ENCODE measurements at regions of chr1 and their contacts with region 1.

Region 1: GRCh38 chr1:243255791-243256512 is at the start of gene SDCCAG8:
- DNase-seq: peak; percentile 93 to 97 (median 94)
- H3K4me3 ChIP-seq: peak within 1 kb of the TSS; percentile 85 to 92
- H3K4me3 Mint-ChIP-seq: peak within 1 kb of the TSS; percentile 96 to 100 (median 100)
- H3K27ac ChIP-seq: peak within 1 kb of the TSS; percentile 87
- H3K27ac Mint-ChIP-seq: peak within 1 kb of the TSS; percentile 99 to 100 (median 100)
- H3K4me1 ChIP-seq: peaks cover 25% of the 10 kb centered on the region
- H3K4me1 Mint-ChIP-seq: peaks cover 27 to 51% (median 37%) of the 10 kb centered on the region in 4 donors
- H3K27me3 ChIP-seq: no peaks in the 10 kb centered on the region
- H3K27me3 Mint-ChIP-seq: peaks cover 0 to 2% of the 10 kb centered on the region in 2 donors
- total RNA-seq, gene SDCCAG8: 32.8 to 35.7 TPM

Region 2: DNA sequence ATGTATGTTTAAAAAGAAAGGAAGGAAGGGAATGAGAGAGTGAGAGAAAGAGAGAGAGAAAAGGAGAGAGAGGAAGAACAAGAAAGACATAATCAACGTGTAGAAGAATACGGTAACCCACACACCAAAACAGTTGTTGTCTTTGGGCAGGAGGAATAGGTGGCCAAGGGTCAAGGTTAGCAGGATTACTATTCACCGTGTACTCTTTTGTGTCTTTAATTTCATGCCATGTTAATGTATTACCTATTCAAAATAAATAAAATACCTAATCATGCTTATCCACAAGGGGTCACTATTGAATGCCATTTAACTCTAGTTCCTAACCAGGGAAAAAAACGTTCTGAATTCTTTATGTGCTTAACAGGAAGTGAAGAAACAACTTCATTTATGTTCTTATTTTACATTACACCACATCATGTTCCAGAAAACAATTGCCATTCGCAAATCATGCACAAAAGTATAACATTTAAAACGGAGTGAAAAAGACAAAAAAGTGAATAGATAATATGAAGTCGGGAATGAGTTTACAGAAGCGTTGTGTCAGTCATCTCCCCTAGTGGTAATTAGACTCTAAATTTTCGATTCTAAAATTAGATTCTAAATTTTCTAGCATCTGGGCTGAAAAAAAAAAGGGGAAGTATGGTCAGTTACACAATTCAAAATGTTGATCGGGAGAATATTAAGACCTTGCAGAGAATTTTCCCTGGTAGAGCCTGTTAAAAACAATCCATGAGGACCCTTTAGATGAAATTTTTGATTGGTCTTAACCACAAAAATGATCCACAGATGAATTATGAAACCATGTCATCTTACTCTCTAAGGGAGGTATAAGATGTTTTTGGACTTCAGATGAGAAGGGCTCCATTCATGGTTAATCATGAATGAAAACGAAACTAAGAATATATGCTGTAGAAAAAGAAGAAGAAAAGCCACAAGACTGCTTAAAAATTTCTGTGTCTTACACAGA is 1724.5 kb before region 1 on chr1:
- CTCF ChIA-PET with region 1: no interaction called
- POLR2A ChIA-PET with region 1: no interaction called
- intact Hi-C with region 1: loop called (anchors 5 kb)
- DNase-seq: peak in 4 of 5 donors; percentile 65 to 70 (median 68)
- H3K4me3 ChIP-seq: peak overlapping the region; percentile 45 to 52
- H3K4me3 Mint-ChIP-seq: peak overlapping the region; percentile 91 to 99 (median 98)
- H3K27ac ChIP-seq: peak overlapping the region; percentile 10
- H3K27ac Mint-ChIP-seq: peak overlapping the region in 6 of 7 donors; percentile 1 to 94 (median 90)
- H3K4me1 ChIP-seq: peaks cover 5% of the 10 kb centered on the region
- H3K4me1 Mint-ChIP-seq: peaks cover 5 to 11% (median 9%) of the 10 kb centered on the region in 4 donors
- H3K27me3 ChIP-seq: no peaks in the 10 kb centered on the region
- H3K27me3 Mint-ChIP-seq: peaks cover 0 to 1% of the 10 kb centered on the region in 2 donors

Region 3: GRCh38 chr1:241847796-241848685 is 1407.9 kb before region 1 on chr1 and contains the start of gene EXO1:
- CTCF ChIA-PET with region 1: no interaction called
- POLR2A ChIA-PET with region 1: interaction called, 4 read pairs
- intact Hi-C with region 1: loop called (anchors 5 kb)
- DNase-seq: peak; percentile 90 to 93 (median 92)
- H3K4me3 ChIP-seq: peak within 1 kb of the TSS; percentile 80 to 98
- H3K4me3 Mint-ChIP-seq: peak within 1 kb of the TSS; percentile 95 to 99 (median 98)
- H3K27ac ChIP-seq: peak within 1 kb of the TSS; percentile 85
- H3K27ac Mint-ChIP-seq: peak within 1 kb of the TSS; percentile 98 to 100 (median 99)
- H3K4me1 ChIP-seq: peaks cover 14% of the 10 kb centered on the region
- H3K4me1 Mint-ChIP-seq: peaks cover 13 to 20% (median 15%) of the 10 kb centered on the region in 4 donors
- H3K27me3 ChIP-seq: no peaks in the 10 kb centered on the region
- H3K27me3 Mint-ChIP-seq: no peaks in the 10 kb centered on the region
- total RNA-seq, gene EXO1: 0.41 to 0.44 TPM

Region 4: DNA sequence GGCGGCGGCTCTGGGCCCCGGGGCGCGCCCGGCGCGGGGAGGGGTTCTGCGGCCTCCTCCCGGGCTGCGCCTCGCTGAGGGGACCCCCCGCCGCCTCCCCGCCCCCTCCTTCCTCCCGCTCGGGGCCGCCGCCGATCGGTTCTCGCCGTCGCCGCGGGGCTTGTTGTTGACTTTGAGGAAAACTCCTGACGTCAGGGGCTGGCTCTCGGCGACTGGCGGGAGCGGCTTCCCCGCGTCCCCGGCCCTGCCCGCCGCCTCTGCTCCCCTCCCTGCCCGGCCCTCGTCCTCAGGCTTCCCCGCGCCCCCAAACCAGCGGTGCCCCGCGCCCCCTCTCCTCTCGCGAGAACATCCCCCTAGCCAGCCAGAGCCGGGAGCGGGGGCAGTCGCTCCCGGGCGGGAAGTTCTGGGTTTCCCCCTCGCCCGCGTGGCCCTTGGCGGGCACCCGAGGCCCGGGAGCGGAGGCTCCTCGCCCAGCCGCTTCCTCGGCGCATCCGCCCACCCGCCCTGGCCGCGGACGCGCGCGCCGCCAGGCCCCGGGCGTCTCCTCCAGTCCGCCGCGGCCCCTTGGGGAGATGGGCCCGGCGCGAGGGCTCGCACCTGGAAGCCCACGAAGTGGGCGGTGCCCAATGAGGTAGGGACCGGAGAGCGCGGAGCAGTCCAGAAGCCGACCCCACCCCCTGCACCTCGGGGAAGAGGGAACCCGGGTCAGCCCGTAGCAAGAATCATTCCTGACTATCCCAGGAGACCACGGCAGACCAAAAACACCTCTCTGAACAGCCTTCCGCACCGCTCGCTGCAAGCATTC is 594.7 kb after region 1 on chr1:
- CTCF ChIA-PET with region 1: no interaction called
- POLR2A ChIA-PET with region 1: interaction called, 5 read pairs
- intact Hi-C with region 1: loop called (anchors 2 kb)
- DNase-seq: peak; percentile 87 to 91 (median 89)
- H3K4me3 ChIP-seq: peak overlapping the region; percentile 63 to 70
- H3K4me3 Mint-ChIP-seq: peak overlapping the region; percentile 90 to 95 (median 94)
- H3K27ac ChIP-seq: peak overlapping the region; percentile 95
- H3K27ac Mint-ChIP-seq: peak overlapping the region; percentile 86 to 98 (median 97)
- H3K4me1 ChIP-seq: peaks cover 38% of the 10 kb centered on the region
- H3K4me1 Mint-ChIP-seq: peaks cover 22 to 39% (median 31%) of the 10 kb centered on the region in 4 donors
- H3K27me3 ChIP-seq: no peaks in the 10 kb centered on the region
- H3K27me3 Mint-ChIP-seq: peaks cover 0 to 2% of the 10 kb centered on the region in 2 donors

Region 5: GRCh38 chr1:244074559-244075171 is 818.7 kb after region 1 on chr1:
- CTCF ChIA-PET with region 1: interaction called, 3 read pairs
- POLR2A ChIA-PET with region 1: interaction called, 10 read pairs
- intact Hi-C with region 1: no loop called
- DNase-seq: peak; percentile 80 to 88 (median 86)
- H3K4me3 ChIP-seq: peak overlapping the region; percentile 5 to 49
- H3K4me3 Mint-ChIP-seq: peak overlapping the region; percentile 88 to 96 (median 91)
- H3K27ac ChIP-seq: peak overlapping the region; percentile 27
- H3K27ac Mint-ChIP-seq: peak overlapping the region; percentile 90 to 99 (median 97)
- H3K4me1 ChIP-seq: peaks cover 32% of the 10 kb centered on the region
- H3K4me1 Mint-ChIP-seq: peaks cover 26 to 38% (median 31%) of the 10 kb centered on the region in 4 donors
- H3K27me3 ChIP-seq: no peaks in the 10 kb centered on the region
- H3K27me3 Mint-ChIP-seq: no peaks in the 10 kb centered on the region

Region 6: GRCh38 chr1:244461245-244462071 is 1205.5 kb after region 1 on chr1 and contains the start of gene CATSPERE:
- CTCF ChIA-PET with region 1: no interaction called
- POLR2A ChIA-PET with region 1: interaction called, 11 read pairs
- intact Hi-C with region 1: no loop called
- DNase-seq: peak; percentile 72 to 80 (median 77)
- H3K4me3 ChIP-seq: peak within 1 kb of the TSS; percentile 70 to 89
- H3K4me3 Mint-ChIP-seq: peak within 1 kb of the TSS; percentile 78 to 90 (median 84)
- H3K27ac ChIP-seq: peak within 1 kb of the TSS; percentile 70
- H3K27ac Mint-ChIP-seq: peak within 1 kb of the TSS; percentile 62 to 98 (median 88)
- H3K4me1 ChIP-seq: peaks cover 9% of the 10 kb centered on the region
- H3K4me1 Mint-ChIP-seq: peaks cover 7 to 14% (median 11%) of the 10 kb centered on the region in 4 donors
- H3K27me3 ChIP-seq: no peaks in the 10 kb centered on the region
- H3K27me3 Mint-ChIP-seq: no peaks in the 10 kb centered on the region
- total RNA-seq, gene CATSPERE: 1.4 to 2.3 TPM

Region 7: GRCh38 chr1:244835276-244836134 is 1579.6 kb after region 1 on chr1 and contains the start of gene COX20:
- CTCF ChIA-PET with region 1: no interaction called
- POLR2A ChIA-PET with region 1: interaction called, 21 read pairs
- intact Hi-C with region 1: loop called (anchors 1 kb)
- DNase-seq: peak; percentile 89 to 96 (median 94)
- H3K4me3 ChIP-seq: peak within 1 kb of the TSS; percentile 74 to 87
- H3K4me3 Mint-ChIP-seq: peak within 1 kb of the TSS; percentile 89 to 98 (median 96)
- H3K27ac ChIP-seq: peak within 1 kb of the TSS; percentile 94
- H3K27ac Mint-ChIP-seq: peak within 1 kb of the TSS; percentile 93 to 100 (median 99)
- H3K4me1 ChIP-seq: peaks cover 52% of the 10 kb centered on the region
- H3K4me1 Mint-ChIP-seq: peaks cover 35 to 67% (median 42%) of the 10 kb centered on the region in 4 donors
- H3K27me3 ChIP-seq: no peaks in the 10 kb centered on the region
- H3K27me3 Mint-ChIP-seq: no peaks in the 10 kb centered on the region
- total RNA-seq, gene COX20: 31.3 to 32.9 TPM

Measured in CD4-positive, alpha-beta memory T cell (primary cell).